Posterior vena cava (tissue), 2 donors: ENCODE measurements at regions of chr1 and their contacts with region 1.

Region 1: GRCh38 chr1:51073456-51073855 is 28.6 kb upstream of the C1orf185 start:
- DNase-seq: no peak

Region 2: GRCh38 chr1:51025374-51025773 is 48.1 kb before region 1 on chr1:
- intact Hi-C with region 1: no loop called
- DNase-seq: no peak

Region 3: DNA sequence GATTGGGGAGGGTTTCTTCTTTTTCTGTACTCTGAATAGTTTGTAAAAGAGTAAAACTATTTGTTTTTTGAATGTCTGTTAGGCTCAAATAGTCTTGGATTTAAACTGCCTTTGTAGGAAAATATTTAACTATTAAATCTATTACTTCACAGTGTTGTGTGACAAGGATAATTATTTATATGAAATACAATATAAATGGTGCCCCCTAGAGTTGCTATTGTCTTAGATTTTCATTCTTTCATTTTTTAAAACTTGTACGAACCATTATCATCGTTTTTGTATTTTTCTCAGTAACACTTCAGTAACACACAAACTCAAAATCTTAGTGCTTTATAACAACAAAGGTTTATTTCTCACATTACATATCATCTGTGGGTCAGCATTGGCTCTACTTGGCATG is 66.0 kb after region 1 on chr1:
- intact Hi-C with region 1: loop called in 1 of 2 experiments (anchors 2 kb)
- DNase-seq: no peak